GM12878 (cell line): ENCODE measurements at regions of chr12 and their contacts with region 1.

Region 1: GRCh38 chr12:113358381-113359132 is at the start of gene PLBD2:
- DNase-seq: peak; percentile 59
- ATAC-seq: peak; percentile 95
- H3K4me3 ChIP-seq: peak within 1 kb of the TSS; percentile 71
- H3K27ac ChIP-seq: peak within 1 kb of the TSS; percentile 40
- H3K4me1 ChIP-seq: 0 out of 2 replicates have a peak, but pooled peaks cover 4% of the 10 kb centered on the region
- H3K27me3 ChIP-seq: no peaks in the 10 kb centered on the region
- CTCF ChIP-seq: no peak
- EP300 ChIP-seq: no peak
- POLR2A ChIP-seq: peak; percentile 67
- RAD21 ChIP-seq: no peak
- polyA plus RNA-seq, gene PLBD2: 1.6 to 2.3 TPM

Region 2: GRCh38 chr12:113334786-113335540 is 23.6 kb before region 1 on chr12 and contains the start of gene SLC8B1:
- CTCF ChIA-PET with region 1: interaction called, 6 read pairs
- POLR2A ChIA-PET with region 1: interaction called, 9 read pairs
- RAD21 ChIA-PET with region 1: no interaction called
- SMC1A ChIA-PET with region 1: interaction called, 5 read pairs
- in situ Hi-C with region 1: no loop called
- intact Hi-C with region 1: loop called (anchors 2 kb)
- DNase-seq: no peak
- ATAC-seq: peak; percentile 98
- H3K4me3 ChIP-seq: peak within 1 kb of the TSS; percentile 74
- H3K27ac ChIP-seq: peak within 1 kb of the TSS; percentile 22; the same call in 1 of the 2 replicates
- H3K4me1 ChIP-seq: no peaks in the 10 kb centered on the region
- H3K27me3 ChIP-seq: no peaks in the 10 kb centered on the region
- CTCF ChIP-seq: no peak
- EP300 ChIP-seq: no peak
- POLR2A ChIP-seq: peak; percentile 94
- RAD21 ChIP-seq: no peak
- polyA plus RNA-seq, gene SLC8B1: 0.18 to 0.20 TPM